ENCODE measurements at regions of chr3 and their contacts with region 1.

Region 1: DNA sequence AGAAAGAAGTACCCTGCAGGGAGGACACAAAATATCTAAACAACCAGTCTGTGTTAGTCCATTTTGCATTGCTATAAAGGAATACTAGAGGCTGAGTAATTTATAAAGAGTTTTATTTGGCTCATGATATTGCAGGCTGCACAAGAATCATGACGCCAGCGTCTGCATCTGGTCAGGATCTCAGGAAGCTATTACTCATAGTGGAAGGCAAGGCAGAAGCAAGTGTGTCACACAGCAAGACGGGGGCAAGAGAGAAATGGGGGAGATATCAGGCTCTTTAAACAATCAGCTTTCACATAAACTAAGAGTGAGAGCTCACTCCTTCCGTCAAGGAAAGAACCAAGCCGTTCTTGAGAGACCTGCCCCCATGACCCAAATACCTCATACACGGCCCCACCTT is 614.8 kb downstream of the ZIC1 start:
- DNase-seq: no peak
- H3K4me3 Mint-ChIP-seq: no peak overlapping the region
- H3K27ac Mint-ChIP-seq: no peak overlapping the region
- H3K4me1 Mint-ChIP-seq: no peaks in the 10 kb centered on the region
- H3K27me3 Mint-ChIP-seq: no peaks in the 10 kb centered on the region

Region 2: GRCh38 chr3:148925845-148926244 is 901.9 kb after region 1 on chr3:
- intact Hi-C with region 1: loop called (anchors 5 kb)
- DNase-seq: no peak
- H3K4me3 Mint-ChIP-seq: no peak overlapping the region
- H3K27ac Mint-ChIP-seq: no peak overlapping the region
- H3K4me1 Mint-ChIP-seq: no peaks in the 10 kb centered on the region
- H3K27me3 Mint-ChIP-seq: peaks cover 3% of the 10 kb centered on the region